Common myeloid progenitor, CD34-positive (primary cell): ENCODE measurements at regions of chr2 and their contacts with region 1.

Region 1: DNA sequence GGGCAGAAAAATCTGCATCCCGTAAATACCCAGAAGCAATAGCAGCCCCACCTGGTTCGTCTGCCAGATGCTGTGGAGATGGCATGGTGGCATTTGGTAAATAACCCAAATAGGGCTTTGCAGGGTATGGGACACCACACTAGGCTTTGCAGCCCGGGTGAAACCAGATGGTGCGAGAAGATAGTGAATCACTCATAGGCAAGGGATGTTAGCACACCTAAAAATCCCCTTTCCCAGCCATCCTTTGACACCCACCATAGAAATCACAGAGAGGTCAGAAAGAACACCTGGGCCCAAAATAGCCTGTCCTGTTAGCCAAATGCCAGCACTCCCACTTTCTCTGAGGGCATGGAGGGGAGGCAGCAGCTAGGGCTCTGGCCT is 47.6 kb downstream of the BCL11A start:
- DNase-seq: peak in 2 of 3 donors; percentile 52 to 62
- H3K4me3 ChIP-seq: no peak overlapping the region
- H3K27ac ChIP-seq: peak overlapping the region; percentile 4 to 44
- H3K4me1 ChIP-seq: peaks cover under 1 to 55% (median 19%) of the 10 kb centered on the region in 4 experiments
- H3K27me3 ChIP-seq: no peaks in the 10 kb centered on the region

Region 2: DNA sequence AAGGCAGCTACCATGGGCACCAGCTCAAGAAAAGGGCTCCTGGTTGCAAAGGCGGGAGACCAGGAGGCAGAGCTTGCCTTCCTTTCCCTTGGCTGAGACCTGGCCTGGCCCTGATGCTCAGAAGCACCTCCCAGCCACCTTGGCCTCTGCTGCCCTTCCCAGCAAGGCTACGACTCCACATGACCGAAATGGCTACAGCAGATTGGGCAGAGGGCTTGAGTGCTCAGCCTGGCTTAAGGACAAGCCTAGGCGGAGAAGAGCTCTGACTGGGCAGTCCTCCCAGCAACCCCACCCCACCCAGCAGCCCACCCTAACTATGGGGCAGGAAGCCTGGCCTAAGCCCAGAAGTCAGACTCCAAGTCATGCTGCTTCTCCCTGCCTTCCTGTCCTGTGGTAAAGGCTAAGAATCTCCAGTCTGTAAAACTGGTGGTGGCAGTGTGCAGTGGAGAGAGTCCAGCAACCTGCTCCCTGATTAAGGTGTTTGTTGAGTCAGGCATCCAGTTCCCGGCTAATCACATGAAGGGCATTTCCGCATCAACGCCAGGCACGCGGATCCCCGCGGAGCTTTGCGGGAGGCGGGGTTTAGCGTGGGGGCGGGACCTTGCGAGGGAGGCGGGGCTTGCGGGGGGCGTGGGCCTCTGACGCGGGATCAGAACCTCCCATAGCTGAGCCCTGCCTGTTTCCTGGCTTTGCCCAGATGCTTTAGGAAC is 208.4 kb before region 1 on chr2:
- CTCF ChIA-PET with region 1: no interaction called
- POLR2A ChIA-PET with region 1: no interaction called
- DNase-seq: peak; percentile 14 to 37 (median 25)
- H3K4me3 ChIP-seq: peak overlapping the region in 1 of 7 experiments; percentile 25
- H3K27ac ChIP-seq: no peak overlapping the region
- H3K4me1 ChIP-seq: peaks cover 0 to 6% (median 4%) of the 10 kb centered on the region in 4 experiments
- H3K27me3 ChIP-seq: no peaks in the 10 kb centered on the region

Region 3: GRCh38 chr2:60476206-60476954 is 29.5 kb before region 1 on chr2:
- CTCF ChIA-PET with region 1: no interaction called
- POLR2A ChIA-PET with region 1: no interaction called
- DNase-seq: no peak
- H3K4me3 ChIP-seq: no peak overlapping the region
- H3K27ac ChIP-seq: peak overlapping the region in 1 of 2 experiments; percentile 46
- H3K4me1 ChIP-seq: peaks cover 8 to 51% (median 15%) of the 10 kb centered on the region in 4 experiments
- H3K27me3 ChIP-seq: no peaks in the 10 kb centered on the region

Region 4: DNA sequence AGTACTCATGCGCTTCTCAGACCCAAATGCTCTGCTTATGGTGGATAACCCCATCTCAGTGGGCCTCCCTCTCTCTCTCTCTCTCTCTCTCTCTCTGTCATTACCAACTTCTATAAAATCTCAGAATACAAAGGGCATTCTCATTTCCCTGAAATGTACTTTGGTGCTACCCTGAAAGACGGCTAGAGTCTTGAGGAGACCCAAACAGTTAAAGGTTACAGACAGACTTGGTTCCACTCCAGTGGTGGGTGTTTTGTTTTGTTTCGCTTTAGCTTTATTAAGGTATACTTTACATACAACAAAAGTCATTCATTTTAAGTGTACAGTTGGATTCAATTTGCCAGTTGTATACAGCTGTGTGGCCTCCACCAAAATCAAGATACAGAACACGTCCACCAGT is 13.3 kb before region 1 on chr2:
- CTCF ChIA-PET with region 1: interaction called, 24 read pairs
- POLR2A ChIA-PET with region 1: no interaction called
- DNase-seq: no peak
- H3K4me3 ChIP-seq: no peak overlapping the region
- H3K27ac ChIP-seq: no peak overlapping the region
- H3K4me1 ChIP-seq: peaks cover 4 to 49% (median 24%) of the 10 kb centered on the region in 4 experiments
- H3K27me3 ChIP-seq: no peaks in the 10 kb centered on the region

Region 5: DNA sequence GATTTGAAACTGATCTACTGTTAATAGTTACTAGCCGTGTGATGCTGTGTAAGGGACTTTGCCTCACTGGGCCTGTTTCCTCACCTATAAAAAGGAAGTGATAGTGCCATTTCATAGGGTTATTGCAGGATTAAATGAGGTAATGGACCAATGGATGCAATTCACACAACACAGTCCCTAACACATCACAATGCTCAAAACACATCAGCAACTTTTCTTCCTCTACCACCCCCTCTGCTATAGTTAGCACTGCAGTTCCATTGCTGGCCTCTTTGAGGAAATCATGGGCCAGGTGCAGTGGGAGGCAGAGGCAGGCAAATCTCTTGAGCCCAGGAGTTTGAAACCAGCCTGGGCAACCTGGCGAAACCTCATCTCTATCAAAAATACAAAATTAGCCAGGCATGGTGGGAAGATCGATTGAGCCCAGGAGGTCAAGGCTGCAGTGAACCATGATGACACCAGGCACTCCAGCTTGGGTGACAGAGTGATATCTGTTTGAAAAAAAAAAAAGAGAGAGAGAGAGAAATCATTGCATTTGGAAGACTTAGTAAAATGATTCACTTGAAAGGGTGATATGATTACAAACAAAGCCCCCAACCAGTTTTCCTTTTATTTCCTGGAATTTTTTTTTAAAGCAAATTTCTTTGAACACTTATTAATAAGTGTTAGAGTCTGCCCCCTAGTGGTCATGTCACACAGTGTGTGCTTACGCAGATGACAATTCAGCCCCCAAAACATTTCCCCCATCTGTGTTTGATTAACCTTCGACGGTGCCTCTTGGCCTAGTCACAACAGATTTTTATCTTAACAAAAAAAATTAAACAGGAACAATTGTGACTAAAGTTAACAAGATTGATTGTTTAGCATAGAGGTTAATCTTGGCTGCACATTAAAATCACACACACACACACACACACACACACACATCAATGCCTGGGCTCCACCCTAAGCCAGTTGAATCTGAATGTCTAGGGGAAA is 136.2 kb after region 1 on chr2:
- CTCF ChIA-PET with region 1: no interaction called
- POLR2A ChIA-PET with region 1: no interaction called
- DNase-seq: peak; percentile 76 to 85 (median 85)
- H3K4me3 ChIP-seq: no peak overlapping the region
- H3K27ac ChIP-seq: no peak overlapping the region
- H3K4me1 ChIP-seq: peaks cover 0 to 2% (median 0%) of the 10 kb centered on the region in 4 experiments
- H3K27me3 ChIP-seq: no peaks in the 10 kb centered on the region